Mucosa of descending colon (tissue), 3 donors: ENCODE measurements at regions of chr6 and their contacts with region 1.

Region 1: DNA sequence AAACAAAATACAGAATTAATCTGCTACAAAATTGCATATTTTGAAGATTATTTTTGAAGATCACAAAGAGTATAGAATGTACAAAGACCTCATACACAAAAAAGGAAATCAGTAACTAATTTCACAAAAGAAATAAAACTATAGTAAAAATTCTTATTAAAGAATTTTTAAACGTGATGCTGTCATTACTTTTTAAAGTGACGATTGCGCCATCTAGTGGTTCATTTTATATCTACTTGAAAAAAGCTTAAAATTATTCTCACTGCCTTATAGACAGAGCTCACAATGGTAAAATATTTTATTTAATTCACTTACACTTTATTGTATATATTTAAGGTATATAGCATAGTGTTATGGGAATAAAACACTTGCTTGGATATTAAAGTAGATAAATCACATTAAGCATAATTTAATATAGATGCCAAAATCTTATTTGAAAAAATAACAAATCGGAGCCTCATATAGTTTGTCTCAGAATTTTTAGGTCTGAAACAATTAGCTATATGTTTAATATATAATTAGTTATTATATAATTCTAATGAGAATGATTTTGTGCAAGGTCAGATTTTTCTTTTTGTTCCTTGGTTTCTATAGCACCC is 128.8 kb downstream of the PHF3 start:
- DNase-seq: peak in 1 of 3 donors; percentile 9
- ATAC-seq: no peak
- H3K4me3 ChIP-seq: no peak overlapping the region
- H3K4me1 ChIP-seq: peaks cover 4% of the 10 kb centered on the region
- CTCF ChIP-seq: no peak

Region 2: DNA sequence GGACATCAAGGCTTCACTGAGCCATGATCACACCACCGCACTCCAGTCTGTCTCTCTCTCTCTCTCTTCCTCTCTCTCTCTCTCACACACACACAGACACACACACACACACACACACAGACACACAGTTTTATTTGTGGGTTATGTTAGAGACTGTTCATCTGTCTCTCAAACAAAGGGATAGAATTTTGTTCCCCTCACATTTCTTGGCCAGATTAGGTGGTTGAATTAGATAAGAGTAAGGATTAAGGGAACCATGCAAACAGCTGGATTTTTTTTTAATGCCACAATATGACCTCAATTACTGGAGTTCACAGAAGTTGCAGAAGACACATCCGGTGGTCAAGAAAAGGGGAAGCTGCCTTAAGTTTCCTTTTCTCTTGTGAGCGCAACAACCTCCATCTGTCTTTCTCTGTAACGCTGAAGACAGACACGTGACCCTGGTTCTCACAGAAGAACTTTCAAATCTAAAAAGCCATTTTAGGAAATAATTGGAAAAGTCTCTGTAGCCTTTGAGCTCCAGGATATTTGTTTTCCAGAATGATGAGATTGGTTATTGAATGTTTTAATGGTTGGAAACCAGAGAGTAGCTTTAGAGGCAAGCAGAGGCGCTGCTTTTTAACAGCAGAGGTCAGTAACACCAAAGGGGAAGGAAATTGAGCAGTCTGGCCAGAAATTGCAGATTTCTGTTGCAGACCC is 411.7 kb before region 1 on chr6:
- intact Hi-C with region 1: loop called in 1 of 2 experiments (anchors 10 kb)
- DNase-seq: peak in 2 of 3 donors; percentile 26 to 64
- ATAC-seq: peak; percentile 84
- H3K4me3 ChIP-seq: no peak overlapping the region
- H3K4me1 ChIP-seq: peaks cover 18% of the 10 kb centered on the region
- CTCF ChIP-seq: no peak

Region 3: DNA sequence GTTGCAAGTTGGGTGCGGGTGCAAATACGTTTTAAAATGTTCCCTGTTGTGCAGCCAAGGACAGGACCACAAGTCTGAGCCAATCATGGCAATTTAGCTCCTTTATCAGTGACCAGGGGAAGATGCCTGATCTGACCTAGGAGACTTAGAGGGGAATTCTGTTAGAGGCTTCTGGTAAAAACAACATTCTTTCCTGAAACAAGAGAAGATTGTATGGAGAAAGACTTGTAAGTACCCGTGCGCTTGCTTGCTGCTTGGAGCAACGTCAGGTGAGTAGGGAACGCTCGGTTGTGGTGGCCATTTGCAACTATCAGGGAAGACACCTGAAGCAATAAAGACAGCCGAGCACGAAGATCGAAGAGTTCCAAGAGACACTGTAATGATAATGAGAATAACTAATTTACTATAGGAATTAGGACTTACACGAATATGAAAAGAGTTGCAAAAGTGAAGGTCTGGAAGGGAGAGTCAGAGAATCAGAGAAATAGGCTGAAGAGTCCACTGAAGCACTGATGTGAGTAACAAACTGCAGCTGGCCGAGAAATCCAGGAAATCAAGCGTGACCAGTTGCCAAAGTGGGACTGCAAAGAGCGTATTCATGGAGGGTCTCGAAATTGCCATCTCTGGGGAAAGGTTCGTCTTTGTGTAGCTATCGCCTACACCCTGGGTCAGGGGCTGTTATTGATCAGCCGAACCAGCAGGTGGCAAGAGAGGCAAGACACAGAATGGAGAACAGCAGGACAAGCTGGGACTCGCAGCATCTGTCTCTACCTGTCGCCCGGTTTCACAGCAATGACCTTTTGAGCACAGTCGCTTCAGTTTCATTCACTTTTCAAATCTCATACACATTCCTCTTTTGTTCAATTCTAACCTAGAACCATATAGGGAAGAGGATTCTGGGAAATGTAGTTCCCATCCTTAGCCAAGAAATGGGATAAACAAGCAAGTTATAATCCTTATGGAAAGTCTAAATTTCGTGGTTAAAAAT is 166.1 kb before region 1 on chr6:
- intact Hi-C with region 1: loop called (anchors 2 to 5 kb)
- DNase-seq: peak; percentile 68 to 84 (median 82)
- ATAC-seq: peak; percentile 99
- H3K4me3 ChIP-seq: peak overlapping the region; percentile 2
- H3K4me1 ChIP-seq: no peaks in the 10 kb centered on the region
- CTCF ChIP-seq: peak; percentile 84